Activated CD4-positive, alpha-beta memory T cell treated with anti-CD3 and anti-CD28 coated beads, Interleukin-2, amount 10 ng/mL, durations not matched to agents 7 days and 5 days (primary cell): ENCODE measurements at regions of chr17 and their contacts with region 1.

Region 1: DNA sequence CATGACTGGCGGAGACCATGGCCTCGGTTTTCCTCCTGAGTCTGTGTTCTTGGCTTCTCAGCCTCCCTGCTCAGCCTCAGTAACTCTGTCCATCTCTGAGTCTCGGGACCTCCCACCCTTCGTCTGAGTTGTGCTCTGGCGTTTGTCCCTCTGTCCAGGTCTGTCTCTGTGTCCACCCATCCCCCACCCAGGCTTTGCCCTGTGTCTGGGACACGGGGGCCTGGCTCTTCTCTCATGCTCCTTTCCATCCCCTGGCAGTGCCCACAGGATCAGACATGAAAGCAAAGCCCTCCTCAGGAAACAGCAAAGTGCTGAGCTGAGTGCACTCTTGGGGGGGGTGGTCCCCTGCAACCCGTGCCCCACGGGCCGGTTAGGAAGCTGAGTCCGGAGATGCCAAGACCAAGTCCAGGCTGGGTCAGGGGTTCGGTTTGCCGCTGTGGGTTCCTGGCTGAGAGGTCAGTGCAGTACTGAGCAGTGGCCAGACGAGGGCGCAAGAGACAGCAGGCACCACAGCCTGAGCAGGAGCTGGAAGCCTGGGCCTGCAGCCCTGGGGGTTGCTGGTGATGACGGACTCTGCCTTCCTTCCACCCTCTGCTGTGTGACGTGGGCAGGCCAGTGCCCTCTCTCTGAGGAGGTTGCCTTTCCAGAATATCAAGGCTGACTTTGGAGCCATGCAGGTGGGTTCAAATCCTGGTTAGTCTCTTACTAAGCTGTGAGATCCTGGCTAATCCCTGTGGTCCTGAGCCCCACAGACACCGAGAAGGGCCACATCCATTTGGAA is 2.5 kb downstream of the P2RX1 start:
- DNase-seq: peak; percentile 86
- H3K4me3 Mint-ChIP-seq: no peak overlapping the region
- H3K27ac Mint-ChIP-seq: no peak overlapping the region
- H3K4me1 Mint-ChIP-seq: peaks cover 55% of the 10 kb centered on the region
- H3K27me3 Mint-ChIP-seq: no peaks in the 10 kb centered on the region

Region 2: GRCh38 chr17:3610523-3610922 is 303.2 kb before region 1 on chr17:
- CTCF ChIA-PET with region 1: no interaction called
- POLR2A ChIA-PET with region 1: no interaction called
- DNase-seq: no peak
- H3K4me3 Mint-ChIP-seq: no peak overlapping the region
- H3K27ac Mint-ChIP-seq: no peak overlapping the region
- H3K4me1 Mint-ChIP-seq: no peaks in the 10 kb centered on the region
- H3K27me3 Mint-ChIP-seq: no peaks in the 10 kb centered on the region

Region 3: DNA sequence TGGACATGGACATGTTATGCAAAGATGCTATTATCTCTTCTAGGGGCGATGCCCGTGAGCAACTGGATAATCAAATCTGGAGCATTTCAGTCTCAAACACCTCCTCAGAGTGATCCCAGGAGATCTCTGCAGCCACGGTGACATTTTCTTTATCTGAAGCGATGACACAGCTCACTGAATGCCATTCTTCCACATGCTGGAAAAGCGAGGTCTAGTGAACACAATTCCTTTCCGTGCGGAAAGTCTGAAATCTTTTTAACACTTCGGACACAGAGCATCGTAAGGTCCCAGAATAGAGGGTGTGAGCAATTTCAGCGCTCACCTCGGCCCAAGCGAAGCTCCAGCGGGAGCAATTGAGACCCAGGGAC is 190.5 kb before region 1 on chr17:
- CTCF ChIA-PET with region 1: no interaction called
- POLR2A ChIA-PET with region 1: no interaction called
- DNase-seq: no peak
- H3K4me3 Mint-ChIP-seq: peak overlapping the region; percentile 79
- H3K27ac Mint-ChIP-seq: peak overlapping the region; percentile 68
- H3K4me1 Mint-ChIP-seq: peaks cover 68% of the 10 kb centered on the region
- H3K27me3 Mint-ChIP-seq: no peaks in the 10 kb centered on the region

Region 4: DNA sequence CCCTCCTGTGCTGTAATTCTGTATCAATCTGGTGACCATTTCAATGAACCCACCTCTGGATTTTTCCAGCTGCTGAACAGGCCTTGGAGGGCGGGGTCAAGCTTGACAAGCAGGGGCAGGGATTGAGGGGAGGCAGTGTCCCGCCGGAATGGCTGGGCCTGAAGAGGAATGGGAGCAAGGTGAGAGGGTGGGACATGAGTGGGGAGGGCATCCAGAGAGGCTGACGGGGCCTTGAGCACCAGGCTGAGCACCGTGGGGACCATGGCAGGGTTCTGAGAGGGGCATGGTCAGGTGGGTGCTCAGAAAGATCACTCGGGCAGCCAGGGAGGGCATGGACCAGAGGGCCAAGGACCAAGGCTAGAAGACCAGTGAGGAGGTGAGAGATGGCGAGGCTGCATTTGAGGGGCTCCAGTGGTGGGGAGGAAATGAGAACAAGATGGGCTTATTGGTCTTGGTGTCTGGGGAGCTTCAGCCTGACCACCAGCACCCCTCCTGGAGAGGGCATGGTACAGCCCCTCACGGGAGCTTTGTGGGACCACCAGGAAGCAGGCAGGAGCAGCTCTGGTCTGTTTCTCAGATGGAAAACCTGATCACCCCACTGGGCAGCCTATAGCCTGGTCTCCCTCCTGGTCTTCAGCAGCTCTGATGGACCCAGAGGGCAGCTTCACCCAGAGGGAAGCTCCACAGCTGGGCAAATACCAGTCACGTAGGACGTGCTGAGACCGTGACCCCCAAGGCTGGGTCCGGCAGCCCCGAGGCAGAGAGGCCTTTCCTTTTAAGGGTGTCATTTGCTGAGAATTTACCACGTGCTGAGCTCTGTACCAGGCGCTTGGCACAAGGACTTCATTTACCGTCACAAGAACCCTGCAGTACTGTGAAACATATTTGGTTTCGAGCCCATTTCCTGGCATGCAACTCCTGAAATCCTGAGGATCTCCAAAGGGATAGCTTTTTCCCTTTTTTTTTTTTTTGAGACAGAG is 56.3 kb before region 1 on chr17:
- CTCF ChIA-PET with region 1: no interaction called
- POLR2A ChIA-PET with region 1: no interaction called
- DNase-seq: no peak
- H3K4me3 Mint-ChIP-seq: no peak overlapping the region
- H3K27ac Mint-ChIP-seq: no peak overlapping the region
- H3K4me1 Mint-ChIP-seq: peaks cover 2% of the 10 kb centered on the region
- H3K27me3 Mint-ChIP-seq: peaks cover 3% of the 10 kb centered on the region

Region 5: DNA sequence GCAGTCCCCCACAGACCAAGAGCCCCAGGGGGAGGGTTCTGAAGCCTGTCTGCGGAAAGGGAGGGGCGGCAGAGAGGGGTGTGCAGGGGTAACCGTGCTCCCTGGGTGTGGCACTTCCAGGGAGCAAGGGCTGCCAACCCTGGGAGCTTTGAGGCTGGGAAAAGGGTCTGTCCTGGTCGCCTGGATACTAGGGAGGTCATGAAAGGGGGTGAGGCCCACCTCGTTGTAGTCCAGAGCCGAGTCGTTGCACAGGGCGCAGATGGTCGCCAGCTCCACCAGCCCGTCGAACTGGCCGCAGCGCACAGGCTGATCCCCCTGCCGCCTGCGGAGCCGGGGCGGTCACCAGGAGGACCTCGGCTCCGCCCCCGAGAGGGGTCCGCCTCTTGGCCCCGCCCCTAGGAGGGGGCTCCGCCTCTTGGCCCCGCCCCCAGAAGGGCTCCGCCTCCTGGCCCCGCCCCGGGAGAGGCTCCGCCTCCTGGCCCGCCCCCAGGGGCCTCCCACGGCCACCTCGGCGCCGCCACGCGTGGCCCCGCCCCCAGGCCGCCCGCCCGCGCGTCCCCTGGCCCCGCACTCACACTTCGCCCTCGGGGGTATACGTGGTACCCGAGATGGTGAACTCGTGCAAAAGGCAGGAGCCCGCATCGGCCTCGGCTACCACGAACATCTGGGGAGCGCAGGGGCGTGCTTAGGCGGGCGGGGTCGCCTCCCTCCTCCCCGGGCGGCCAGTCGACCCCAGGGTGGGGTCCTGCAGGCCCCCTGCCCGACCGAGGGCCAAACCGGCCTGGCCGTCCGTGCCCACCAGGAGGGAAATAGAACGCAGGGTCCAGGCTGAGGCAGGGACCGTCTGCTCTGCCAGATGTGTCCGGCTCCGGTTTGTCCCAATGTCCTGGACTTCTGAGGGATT is 31.0 kb after region 1 on chr17:
- CTCF ChIA-PET with region 1: no interaction called
- POLR2A ChIA-PET with region 1: no interaction called
- DNase-seq: peak; percentile 52
- H3K4me3 Mint-ChIP-seq: no peak overlapping the region
- H3K27ac Mint-ChIP-seq: no peak overlapping the region
- H3K4me1 Mint-ChIP-seq: peaks cover 2% of the 10 kb centered on the region
- H3K27me3 Mint-ChIP-seq: no peaks in the 10 kb centered on the region

Region 6: GRCh38 chr17:3965118-3965803 is 51.5 kb after region 1 on chr17:
- CTCF ChIA-PET with region 1: interaction called, 13 read pairs
- POLR2A ChIA-PET with region 1: interaction called, 24 read pairs
- DNase-seq: peak; percentile 85
- H3K4me3 Mint-ChIP-seq: peak overlapping the region; percentile 86
- H3K27ac Mint-ChIP-seq: peak overlapping the region; percentile 95
- H3K4me1 Mint-ChIP-seq: peaks cover 48% of the 10 kb centered on the region
- H3K27me3 Mint-ChIP-seq: peaks cover 3% of the 10 kb centered on the region

Region 7: DNA sequence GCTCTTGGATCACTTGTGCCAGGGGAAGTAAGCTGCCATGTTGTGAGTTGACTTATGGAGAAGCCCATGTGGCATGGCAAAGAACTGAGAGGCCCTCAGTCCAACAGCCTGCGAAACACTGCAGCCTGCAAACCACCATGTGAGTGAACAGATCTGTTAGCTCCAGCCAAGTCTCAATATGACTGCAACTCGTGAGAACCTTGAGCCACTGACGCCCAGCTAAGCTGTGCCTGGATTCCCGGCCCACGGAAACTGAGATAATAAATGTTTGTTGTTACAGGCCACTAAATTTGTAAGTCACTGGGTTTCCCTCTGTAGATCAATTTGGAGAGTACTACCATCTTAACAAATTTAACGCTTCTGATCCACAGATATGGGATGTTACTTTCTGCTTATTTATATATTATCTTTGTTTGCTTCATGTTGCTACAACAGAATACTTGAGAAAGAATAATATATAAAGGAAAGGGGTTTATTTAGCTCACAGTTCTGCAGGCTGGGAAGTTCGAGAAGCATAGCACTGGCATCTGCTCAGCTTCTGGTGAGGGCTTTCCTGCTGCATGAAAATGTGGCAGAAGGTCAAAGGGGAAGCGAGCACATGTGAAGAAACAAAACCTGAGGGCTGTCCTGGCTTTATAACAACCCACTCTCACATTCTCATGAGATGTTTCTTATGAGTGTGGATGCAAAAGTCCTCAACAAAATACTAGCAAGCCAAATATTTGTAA is 79.9 kb after region 1 on chr17:
- CTCF ChIA-PET with region 1: interaction called, 10 read pairs
- POLR2A ChIA-PET with region 1: no interaction called
- DNase-seq: no peak
- H3K4me3 Mint-ChIP-seq: no peak overlapping the region
- H3K27ac Mint-ChIP-seq: no peak overlapping the region
- H3K4me1 Mint-ChIP-seq: no peaks in the 10 kb centered on the region
- H3K27me3 Mint-ChIP-seq: peaks cover 30% of the 10 kb centered on the region

Region 8: DNA sequence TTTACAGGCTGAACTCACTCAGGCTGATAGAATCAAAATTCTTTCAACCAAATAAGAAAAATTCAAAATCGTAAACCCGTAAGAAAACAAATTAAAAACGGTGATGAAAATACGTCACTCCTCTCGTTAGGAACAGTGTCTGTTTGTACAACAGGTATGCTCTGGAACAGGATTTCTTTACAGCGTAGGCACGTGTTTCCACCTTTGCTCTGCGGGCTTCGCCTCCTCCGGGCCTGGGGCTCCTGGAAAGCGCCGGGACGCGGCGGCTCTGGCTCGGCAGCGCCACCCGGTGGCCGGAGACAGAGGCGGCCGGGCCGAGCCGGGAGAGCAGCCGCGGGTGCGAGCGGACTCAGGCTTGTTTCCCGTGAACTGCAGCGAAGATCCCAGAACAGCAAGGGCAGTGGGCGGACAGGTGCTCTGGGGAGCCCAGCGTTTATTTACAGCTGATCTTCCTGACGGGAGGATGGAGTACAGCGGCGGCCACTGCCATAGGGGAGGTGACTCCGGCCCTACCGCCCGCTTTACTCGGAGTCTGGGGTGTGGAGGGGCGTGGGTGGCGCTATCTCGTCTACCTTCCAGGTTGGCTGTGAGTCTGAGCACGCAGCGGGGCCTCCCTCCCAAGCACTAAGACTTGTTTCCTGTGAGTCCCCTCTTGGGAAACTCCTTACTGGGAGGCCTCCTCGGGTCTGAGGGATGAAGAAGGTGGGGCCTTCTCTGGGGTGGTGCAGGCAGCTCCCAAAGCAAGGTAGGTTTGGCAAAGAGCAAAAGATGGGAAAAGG is 91.0 kb after region 1 on chr17:
- CTCF ChIA-PET with region 1: interaction called, 29 read pairs
- POLR2A ChIA-PET with region 1: interaction called, 4 read pairs
- DNase-seq: peak; percentile 66
- H3K4me3 Mint-ChIP-seq: no peak overlapping the region
- H3K27ac Mint-ChIP-seq: no peak overlapping the region
- H3K4me1 Mint-ChIP-seq: peaks cover 6% of the 10 kb centered on the region
- H3K27me3 Mint-ChIP-seq: no peaks in the 10 kb centered on the region

Region 9: GRCh38 chr17:4017377-4017776 is 103.7 kb after region 1 on chr17:
- CTCF ChIA-PET with region 1: interaction called, 10 read pairs
- POLR2A ChIA-PET with region 1: no interaction called
- DNase-seq: no peak
- H3K4me3 Mint-ChIP-seq: no peak overlapping the region
- H3K27ac Mint-ChIP-seq: no peak overlapping the region
- H3K4me1 Mint-ChIP-seq: no peaks in the 10 kb centered on the region
- H3K27me3 Mint-ChIP-seq: no peaks in the 10 kb centered on the region

Region 10: DNA sequence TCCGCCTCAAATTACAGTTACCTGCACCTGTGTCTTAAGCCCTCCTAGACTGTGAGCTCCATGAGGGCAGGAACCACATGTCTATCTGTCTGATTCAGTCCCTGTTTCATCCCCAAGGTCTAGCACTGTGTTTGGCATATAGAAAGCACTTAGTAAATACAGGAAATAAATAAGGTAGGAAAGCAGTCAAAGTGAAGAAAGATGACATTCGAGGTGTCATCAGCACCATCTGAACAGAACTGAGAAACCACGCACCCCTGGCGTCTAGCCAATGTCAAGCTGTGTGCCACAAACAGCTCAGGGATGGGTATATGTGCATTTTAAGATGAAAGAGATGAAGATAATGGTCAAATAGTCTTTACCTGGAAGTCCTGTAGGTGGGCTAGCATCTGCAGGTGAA is 130.1 kb after region 1 on chr17:
- CTCF ChIA-PET with region 1: interaction called, 11 read pairs
- POLR2A ChIA-PET with region 1: no interaction called
- DNase-seq: peak; percentile 59
- H3K4me3 Mint-ChIP-seq: no peak overlapping the region
- H3K27ac Mint-ChIP-seq: peak overlapping the region; percentile 77
- H3K4me1 Mint-ChIP-seq: peaks cover 38% of the 10 kb centered on the region
- H3K27me3 Mint-ChIP-seq: no peaks in the 10 kb centered on the region

Region 11: GRCh38 chr17:4074831-4075495 is 161.2 kb after region 1 on chr17:
- CTCF ChIA-PET with region 1: interaction called, 19 read pairs
- POLR2A ChIA-PET with region 1: no interaction called
- DNase-seq: no peak
- H3K4me3 Mint-ChIP-seq: no peak overlapping the region
- H3K27ac Mint-ChIP-seq: no peak overlapping the region
- H3K4me1 Mint-ChIP-seq: peaks cover 6% of the 10 kb centered on the region
- H3K27me3 Mint-ChIP-seq: no peaks in the 10 kb centered on the region